ENCODE measurements at regions of chr1 and their contacts with region 1.

Region 1: GRCh38 chr1:19311959-19312781 is at the starts of genes AKR7A2 and SLC66A1:
- DNase-seq: peak; percentile 85 to 92
- ATAC-seq: peak; percentile 87 to 91
- H3K4me3 ChIP-seq: peak within 1 kb of the TSS; percentile 79 to 97 (median 87)
- H3K27ac ChIP-seq: peak within 1 kb of the TSS; percentile 93 to 97 (median 96)
- H3K4me1 ChIP-seq: peaks cover 19 to 20% of the 10 kb centered on the region in 2 donors
- H3K27me3 ChIP-seq: no peaks in the 10 kb centered on the region
- CTCF ChIP-seq: peak; percentile 13 to 36 (median 17)
- POLR2A ChIP-seq: peak; percentile 91 to 92
- total RNA-seq, gene AKR7A2: 45.4 to 80.2 (median 60.2) TPM
- total RNA-seq, gene SLC66A1: 13.9 to 30.0 (median 19.3) TPM

Region 2: GRCh38 chr1:19186001-19186400 is 126.2 kb before region 1 on chr1:
- in situ Hi-C with region 1: no loop called
- intact Hi-C with region 1: no loop called
- DNase-seq: no peak
- ATAC-seq: no peak
- H3K4me3 ChIP-seq: no peak overlapping the region
- H3K27ac ChIP-seq: no peak overlapping the region
- H3K4me1 ChIP-seq: no peaks in the 10 kb centered on the region
- H3K27me3 ChIP-seq: no peaks in the 10 kb centered on the region
- CTCF ChIP-seq: no peak
- POLR2A ChIP-seq: no peak

Region 3: GRCh38 chr1:19251305-19252196 is 60.6 kb before region 1 on chr1 and contains the starts of genes EMC1 and MRTO4:
- in situ Hi-C with region 1: no loop called
- intact Hi-C with region 1: loop called (anchors 5 kb)
- DNase-seq: peak; percentile 55 to 65
- ATAC-seq: peak; percentile 94
- H3K4me3 ChIP-seq: peak within 1 kb of the TSS; percentile 83 to 98 (median 90)
- H3K27ac ChIP-seq: peak within 1 kb of the TSS; percentile 85 to 97 (median 96)
- H3K4me1 ChIP-seq: peaks cover 29 to 32% of the 10 kb centered on the region in 2 donors
- H3K27me3 ChIP-seq: no peaks in the 10 kb centered on the region
- CTCF ChIP-seq: peak in 1 of 5 experiments; percentile 34
- POLR2A ChIP-seq: peak; percentile 32 to 46
- total RNA-seq, gene EMC1: 24.7 to 49.7 (median 43.0) TPM
- total RNA-seq, gene MRTO4: 19.2 to 28.8 (median 26.7) TPM

Region 4: DNA sequence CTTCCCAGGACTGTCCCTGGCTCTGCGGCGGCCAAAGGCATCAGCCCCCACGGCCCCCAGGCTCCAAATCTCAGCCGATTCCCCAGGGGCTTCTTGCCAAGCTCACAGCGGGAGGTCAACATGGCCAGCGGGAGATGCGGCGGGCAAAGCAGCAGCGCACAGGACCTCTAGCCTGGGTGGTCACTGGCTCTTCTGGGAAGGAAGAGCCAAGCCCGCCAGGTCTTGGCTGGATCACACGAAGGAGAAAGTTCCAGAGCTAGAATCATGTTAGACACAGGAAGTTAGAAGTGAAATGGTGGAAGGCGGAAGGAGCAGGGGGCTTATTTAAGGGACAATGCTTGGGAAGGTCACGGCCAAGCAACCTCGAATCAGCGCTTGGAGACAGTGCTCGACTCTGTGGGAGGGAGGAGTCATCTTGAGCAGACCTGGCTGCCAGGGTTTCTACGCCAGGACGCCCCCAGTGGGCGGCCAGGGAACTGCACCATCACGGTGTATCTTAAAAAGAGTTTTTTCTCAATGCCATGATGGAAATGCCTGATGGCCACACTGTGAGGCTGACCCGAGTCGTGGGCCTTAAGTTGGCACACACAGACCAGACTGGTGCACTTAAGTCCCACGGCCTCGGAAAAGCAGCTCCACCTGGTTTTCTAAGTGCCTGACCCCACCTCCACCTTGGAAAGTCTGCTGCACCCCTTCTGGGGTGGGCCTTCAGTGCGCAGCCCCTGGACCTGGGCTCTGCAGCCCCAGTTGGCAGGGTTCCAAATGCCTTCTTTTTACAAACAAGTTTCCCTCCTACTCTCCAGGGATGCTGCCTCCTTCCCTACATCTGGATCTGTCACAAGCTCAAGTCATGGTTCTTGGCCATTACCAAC is 29.3 kb after region 1 on chr1:
- in situ Hi-C with region 1: no loop called
- intact Hi-C with region 1: loop called (anchors 1 kb)
- DNase-seq: peak in 1 of 2 donors; percentile 68
- ATAC-seq: peak; percentile 35 to 68
- H3K4me3 ChIP-seq: no peak overlapping the region
- H3K27ac ChIP-seq: peak overlapping the region in 2 of 4 donors; percentile 30 to 33
- H3K4me1 ChIP-seq: no peaks in the 10 kb centered on the region
- H3K27me3 ChIP-seq: no peaks in the 10 kb centered on the region
- CTCF ChIP-seq: peak; percentile 67 to 88 (median 78)
- POLR2A ChIP-seq: no peak

Region 5: GRCh38 chr1:19577036-19577435 is 264.9 kb after region 1 on chr1:
- in situ Hi-C with region 1: no loop called
- intact Hi-C with region 1: no loop called
- DNase-seq: no peak
- ATAC-seq: no peak
- H3K4me3 ChIP-seq: no peak overlapping the region
- H3K27ac ChIP-seq: no peak overlapping the region
- H3K4me1 ChIP-seq: no peaks in the 10 kb centered on the region
- H3K27me3 ChIP-seq: no peaks in the 10 kb centered on the region
- CTCF ChIP-seq: no peak
- POLR2A ChIP-seq: no peak

Measured in gastrocnemius medialis (tissue), 4 donors.